Activated naive CD4-positive, alpha-beta T cell treated with anti-CD3 and anti-CD28 coated beads for 36 hours (primary cell): ENCODE measurements at regions of chr3 and their contacts with region 1.

Region 1: GRCh38 chr3:23865595-23866450 is 51.0 kb downstream of the NKIRAS1 start:
- DNase-seq: no peak
- H3K4me3 Mint-ChIP-seq: no peak overlapping the region
- H3K27ac Mint-ChIP-seq: no peak overlapping the region
- H3K4me1 Mint-ChIP-seq: peaks cover 31% of the 10 kb centered on the region
- H3K27me3 Mint-ChIP-seq: no peaks in the 10 kb centered on the region

Region 2: GRCh38 chr3:22922317-22922716 is 943.5 kb before region 1 on chr3:
- CTCF ChIA-PET with region 1: no interaction called
- intact Hi-C with region 1: loop called (anchors 10 kb)
- DNase-seq: no peak
- H3K4me3 Mint-ChIP-seq: no peak overlapping the region
- H3K27ac Mint-ChIP-seq: no peak overlapping the region
- H3K4me1 Mint-ChIP-seq: no peaks in the 10 kb centered on the region
- H3K27me3 Mint-ChIP-seq: no peaks in the 10 kb centered on the region

Region 3: DNA sequence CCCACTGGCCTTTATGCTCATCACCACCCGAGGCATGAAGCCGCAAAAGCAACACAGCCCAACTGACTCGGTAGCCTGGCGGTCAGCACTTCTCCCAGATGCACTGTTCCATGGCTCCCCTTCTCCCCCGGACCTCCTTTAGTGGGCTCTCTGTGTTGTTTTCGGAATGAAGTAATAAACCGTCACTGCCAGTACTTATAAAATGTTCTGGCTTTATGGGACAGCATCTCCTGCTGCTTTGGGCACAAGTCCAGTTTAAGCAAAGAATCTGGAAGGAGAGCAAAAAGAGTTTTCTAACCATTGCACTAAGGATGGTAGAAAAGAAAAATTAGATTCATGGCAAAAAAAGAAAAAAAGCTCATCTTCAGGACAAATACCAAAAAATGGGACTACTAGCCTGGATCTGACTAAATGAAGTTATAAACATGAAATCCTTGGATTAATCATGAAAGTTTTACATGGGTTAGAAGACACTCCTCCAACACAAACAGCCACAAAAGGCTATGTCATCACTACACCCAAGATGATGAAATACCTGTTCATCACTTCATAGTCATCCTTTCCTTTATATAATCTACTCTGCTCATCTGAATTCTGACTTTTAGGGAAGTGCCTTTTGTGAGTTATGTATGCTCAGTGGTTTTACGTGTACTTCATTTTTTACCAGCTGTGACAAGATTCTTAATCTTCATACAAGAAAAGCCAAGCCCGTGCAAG is 752.2 kb before region 1 on chr3:
- CTCF ChIA-PET with region 1: no interaction called
- intact Hi-C with region 1: no loop called
- DNase-seq: no peak
- H3K4me3 Mint-ChIP-seq: no peak overlapping the region
- H3K27ac Mint-ChIP-seq: no peak overlapping the region
- H3K4me1 Mint-ChIP-seq: peaks cover 10% of the 10 kb centered on the region
- H3K27me3 Mint-ChIP-seq: peaks cover 3% of the 10 kb centered on the region